B cell (primary cell): ENCODE measurements at regions of chr17 and their contacts with region 1.

Region 1: GRCh38 chr17:76726231-76726775 is at the start of gene JMJD6:
- DNase-seq: no peak
- ATAC-seq: peak; percentile 83
- H3K4me3 ChIP-seq: peak within 1 kb of the TSS; percentile 67 to 92 (median 84)
- H3K4me3 Mint-ChIP-seq: peak within 1 kb of the TSS; percentile 99
- H3K27ac ChIP-seq: peak within 1 kb of the TSS; percentile 98 to 99
- H3K27ac Mint-ChIP-seq: peak within 1 kb of the TSS; percentile 99
- H3K4me1 ChIP-seq: peaks cover 30 to 52% of the 10 kb centered on the region in 2 donors
- H3K4me1 Mint-ChIP-seq: peaks cover 50% of the 10 kb centered on the region
- H3K27me3 ChIP-seq: no peaks in the 10 kb centered on the region
- H3K27me3 Mint-ChIP-seq: no peaks in the 10 kb centered on the region
- CTCF ChIP-seq: no peak
- total RNA-seq, gene JMJD6: 38.2 and 41.1 TPM in 2 replicates

Region 2: GRCh38 chr17:75784473-75785015 is 941.8 kb before region 1 on chr17 and contains the start of gene UNK:
- CTCF ChIA-PET with region 1: no interaction called
- POLR2A ChIA-PET with region 1: no interaction called
- intact Hi-C with region 1: loop called (anchors 2 kb)
- DNase-seq: peak; percentile 99
- ATAC-seq: peak; percentile 75
- H3K4me3 ChIP-seq: peak within 1 kb of the TSS; percentile 75 to 83 (median 81)
- H3K4me3 Mint-ChIP-seq: peak within 1 kb of the TSS; percentile 96
- H3K27ac ChIP-seq: peak within 1 kb of the TSS; percentile 100
- H3K27ac Mint-ChIP-seq: peak within 1 kb of the TSS; percentile 100
- H3K4me1 ChIP-seq: peaks cover 42 to 49% of the 10 kb centered on the region in 2 donors
- H3K4me1 Mint-ChIP-seq: peaks cover 53% of the 10 kb centered on the region
- H3K27me3 ChIP-seq: no peaks in the 10 kb centered on the region
- H3K27me3 Mint-ChIP-seq: no peaks in the 10 kb centered on the region
- CTCF ChIP-seq: no peak
- total RNA-seq, gene UNK: 70.3 and 82.3 TPM in 2 replicates

Region 3: DNA sequence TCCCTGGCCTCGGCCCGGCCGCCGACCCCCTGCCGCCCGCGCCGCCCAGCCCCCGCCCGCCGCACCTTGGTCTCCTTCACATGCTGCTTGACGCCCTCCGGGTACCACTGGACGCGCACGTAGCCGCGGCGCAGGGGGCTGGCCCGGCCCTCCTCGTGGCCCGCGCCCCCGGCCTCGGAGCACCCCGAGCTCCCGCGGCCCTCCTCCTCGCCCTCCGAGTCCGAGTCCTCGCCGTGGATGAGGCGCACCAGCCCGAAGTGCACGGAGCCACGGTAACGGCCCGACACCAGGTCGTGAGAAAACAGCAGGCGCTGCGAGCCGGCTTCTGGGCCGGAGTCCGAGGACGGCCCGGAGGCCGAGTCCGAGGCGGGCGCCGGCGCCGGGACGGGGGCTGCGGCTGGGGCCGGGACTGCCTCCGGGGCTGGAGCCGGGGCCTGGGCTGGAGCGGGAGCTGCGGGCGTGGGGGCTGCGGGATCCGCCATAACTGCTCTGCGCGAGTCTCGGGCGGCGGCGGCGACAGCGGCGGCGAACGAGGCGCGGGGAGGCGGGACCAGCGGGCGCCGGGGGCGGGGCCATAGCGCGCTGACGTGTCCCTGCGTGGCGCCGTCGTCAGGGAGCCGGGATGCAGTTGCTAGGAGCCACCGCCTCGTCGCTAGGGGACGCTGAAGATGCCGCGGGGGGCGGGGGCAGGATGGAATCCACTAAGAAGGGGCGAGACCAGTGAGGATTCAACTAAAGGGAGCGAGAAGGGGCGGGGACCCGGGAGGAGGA is 273.5 kb before region 1 on chr17 and contains the start of gene UBE2O:
- CTCF ChIA-PET with region 1: no interaction called
- POLR2A ChIA-PET with region 1: no interaction called
- intact Hi-C with region 1: loop called (anchors 5 kb)
- DNase-seq: peak; percentile 95
- ATAC-seq: peak; percentile 93
- H3K4me3 ChIP-seq: peak within 1 kb of the TSS; percentile 46 to 91 (median 72)
- H3K4me3 Mint-ChIP-seq: peak within 1 kb of the TSS; percentile 88
- H3K27ac ChIP-seq: peak within 1 kb of the TSS; percentile 46 to 77
- H3K27ac Mint-ChIP-seq: peak within 1 kb of the TSS; percentile 88
- H3K4me1 ChIP-seq: peaks cover 22 to 26% of the 10 kb centered on the region in 2 donors
- H3K4me1 Mint-ChIP-seq: peaks cover 37% of the 10 kb centered on the region
- H3K27me3 ChIP-seq: no peaks in the 10 kb centered on the region
- H3K27me3 Mint-ChIP-seq: no peaks in the 10 kb centered on the region
- CTCF ChIP-seq: peak; percentile 62
- total RNA-seq, gene UBE2O: 54.0 and 62.4 TPM in 2 replicates

Region 4: GRCh38 chr17:76654408-76654807 is 71.9 kb before region 1 on chr17:
- CTCF ChIA-PET with region 1: no interaction called
- POLR2A ChIA-PET with region 1: no interaction called
- intact Hi-C with region 1: no loop called
- DNase-seq: no peak
- ATAC-seq: no peak
- H3K4me3 ChIP-seq: no peak overlapping the region
- H3K4me3 Mint-ChIP-seq: no peak overlapping the region
- H3K27ac ChIP-seq: no peak overlapping the region
- H3K27ac Mint-ChIP-seq: no peak overlapping the region
- H3K4me1 ChIP-seq: no peaks in the 10 kb centered on the region
- H3K4me1 Mint-ChIP-seq: no peaks in the 10 kb centered on the region
- H3K27me3 ChIP-seq: no peaks in the 10 kb centered on the region
- H3K27me3 Mint-ChIP-seq: peaks cover 16% of the 10 kb centered on the region
- CTCF ChIP-seq: no peak

Region 5: DNA sequence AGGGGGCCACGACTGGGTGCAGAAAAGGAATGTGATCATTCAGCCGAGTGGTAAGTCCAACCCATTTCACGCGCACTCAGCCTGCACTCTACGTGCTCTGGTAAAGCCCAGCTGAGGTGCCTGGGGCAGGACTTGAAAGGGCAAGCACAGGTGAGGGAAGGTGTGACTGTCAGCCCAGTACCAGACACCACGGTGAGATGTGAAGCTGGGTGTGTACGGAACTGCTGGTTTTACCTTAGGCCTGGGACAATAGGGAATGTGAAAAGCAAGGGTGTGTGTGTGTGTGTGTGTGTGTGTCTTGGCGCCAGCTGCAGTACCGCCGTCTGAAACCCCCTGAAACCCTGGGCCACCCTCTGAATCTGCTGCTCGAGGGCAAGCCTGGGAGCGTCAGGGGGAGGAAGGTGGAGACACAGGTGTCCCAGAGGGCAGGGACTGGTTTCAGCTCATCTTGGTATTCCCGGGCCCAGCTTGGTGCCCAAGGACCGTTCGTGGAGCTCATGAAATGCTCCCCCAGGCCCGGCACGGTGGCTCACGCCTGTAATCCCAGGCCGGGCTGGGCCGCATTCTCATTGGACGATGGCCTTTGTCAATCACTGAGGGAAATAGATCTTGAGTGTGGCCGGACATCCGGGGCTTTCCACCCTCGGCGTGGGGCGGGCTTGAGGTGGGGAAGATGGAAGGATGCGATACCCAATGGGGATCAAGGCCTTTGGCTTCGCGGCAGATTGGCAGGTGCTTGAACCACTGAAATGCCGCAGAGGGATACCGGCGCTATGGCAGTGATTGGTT is 55.0 kb before region 1 on chr17:
- CTCF ChIA-PET with region 1: no interaction called
- POLR2A ChIA-PET with region 1: interaction called, 4 read pairs
- intact Hi-C with region 1: loop called (anchors 1 kb)
- DNase-seq: peak; percentile 99
- ATAC-seq: peak; percentile 99
- H3K4me3 ChIP-seq: peak overlapping the region; percentile 66 to 92 (median 84)
- H3K4me3 Mint-ChIP-seq: peak overlapping the region; percentile 92
- H3K27ac ChIP-seq: peak overlapping the region; percentile 80 to 81
- H3K27ac Mint-ChIP-seq: peak overlapping the region; percentile 93
- H3K4me1 ChIP-seq: peaks cover 10 to 18% of the 10 kb centered on the region in 2 donors
- H3K4me1 Mint-ChIP-seq: peaks cover 25% of the 10 kb centered on the region
- H3K27me3 ChIP-seq: peaks cover 0 to 3% (median 1%) of the 10 kb centered on the region in 4 experiments
- H3K27me3 Mint-ChIP-seq: peaks cover 13% of the 10 kb centered on the region
- CTCF ChIP-seq: no peak

Region 6: GRCh38 chr17:76714822-76715495 is 11.3 kb before region 1 on chr17:
- CTCF ChIA-PET with region 1: interaction called, 56 read pairs
- POLR2A ChIA-PET with region 1: no interaction called
- intact Hi-C with region 1: loop called (anchors 1 kb)
- DNase-seq: peak; percentile 75
- ATAC-seq: peak; percentile 7
- H3K4me3 ChIP-seq: peak overlapping the region in 3 of 5 experiments; percentile 11 to 20 (median 12)
- H3K4me3 Mint-ChIP-seq: peak overlapping the region; percentile 62
- H3K27ac ChIP-seq: peak overlapping the region; percentile 46 to 72
- H3K27ac Mint-ChIP-seq: peak overlapping the region; percentile 21
- H3K4me1 ChIP-seq: peaks cover 22 to 31% of the 10 kb centered on the region in 2 donors
- H3K4me1 Mint-ChIP-seq: peaks cover 25% of the 10 kb centered on the region
- H3K27me3 ChIP-seq: no peaks in the 10 kb centered on the region
- H3K27me3 Mint-ChIP-seq: no peaks in the 10 kb centered on the region
- CTCF ChIP-seq: peak; percentile 91

Region 7: GRCh38 chr17:76737082-76737675 is 10.9 kb after region 1 on chr17 and contains the start of gene SRSF2:
- CTCF ChIA-PET with region 1: interaction called, 29 read pairs
- POLR2A ChIA-PET with region 1: interaction called, 75 read pairs
- intact Hi-C with region 1: loop called (anchors 1 kb)
- DNase-seq: peak; percentile 99
- ATAC-seq: peak; percentile 76
- H3K4me3 ChIP-seq: peak within 1 kb of the TSS; percentile 95 to 99 (median 97)
- H3K4me3 Mint-ChIP-seq: peak within 1 kb of the TSS; percentile 97
- H3K27ac ChIP-seq: peak within 1 kb of the TSS; percentile 95 to 97
- H3K27ac Mint-ChIP-seq: peak within 1 kb of the TSS; percentile 99
- H3K4me1 ChIP-seq: peaks cover 35 to 36% of the 10 kb centered on the region in 2 donors
- H3K4me1 Mint-ChIP-seq: peaks cover 53% of the 10 kb centered on the region
- H3K27me3 ChIP-seq: no peaks in the 10 kb centered on the region
- H3K27me3 Mint-ChIP-seq: no peaks in the 10 kb centered on the region
- CTCF ChIP-seq: no peak
- total RNA-seq, gene SRSF2: 356 and 362 TPM in 2 replicates

Region 8: DNA sequence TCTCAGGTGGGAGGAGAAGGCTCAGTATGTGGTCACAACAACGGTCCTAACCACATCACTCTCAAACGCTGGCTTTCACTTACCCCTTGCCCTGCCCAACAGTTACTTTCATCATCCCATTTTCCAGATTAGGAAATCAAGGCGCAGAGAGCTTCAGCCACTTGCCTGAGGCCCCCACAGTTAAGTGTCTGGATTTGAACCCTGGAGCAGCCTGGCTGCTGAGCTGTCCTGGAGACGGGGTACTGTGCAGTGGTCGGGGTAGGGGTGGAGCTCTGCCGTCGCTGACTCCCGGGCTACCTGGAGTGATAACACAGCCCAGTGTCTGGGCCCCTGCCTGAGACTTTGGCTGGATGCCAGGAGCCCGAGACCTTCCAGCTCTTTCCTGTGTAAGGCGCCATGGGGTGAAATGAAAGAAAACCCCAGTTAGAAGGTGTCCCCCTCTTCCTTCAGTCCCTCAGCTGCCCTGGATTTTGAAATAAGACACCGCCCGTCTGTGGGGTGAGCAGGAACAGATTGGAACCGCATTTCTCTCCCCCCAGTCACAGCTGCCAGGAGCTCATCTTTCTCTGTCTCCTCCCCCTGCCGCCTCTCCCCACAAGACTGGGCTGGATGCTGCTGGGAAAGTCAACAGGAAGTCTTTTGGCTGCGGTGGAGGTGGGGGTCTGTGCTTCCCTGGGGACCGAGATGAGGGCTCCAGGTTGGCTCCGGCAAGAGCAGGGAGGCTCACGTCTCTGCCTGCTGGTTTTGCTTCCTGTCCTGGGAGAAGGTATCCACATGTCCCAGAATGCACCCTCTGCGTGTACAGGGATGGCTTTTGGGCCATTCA is 694.7 kb after region 1 on chr17:
- CTCF ChIA-PET with region 1: no interaction called
- POLR2A ChIA-PET with region 1: no interaction called
- intact Hi-C with region 1: no loop called
- DNase-seq: peak; percentile 57
- ATAC-seq: peak; percentile 46
- H3K4me3 ChIP-seq: peak overlapping the region in 4 of 5 experiments; percentile 13 to 40 (median 24)
- H3K4me3 Mint-ChIP-seq: peak overlapping the region; percentile 82
- H3K27ac ChIP-seq: peak overlapping the region; percentile 25 to 27
- H3K27ac Mint-ChIP-seq: peak overlapping the region; percentile 72
- H3K4me1 ChIP-seq: peaks cover 28 to 49% of the 10 kb centered on the region in 2 donors
- H3K4me1 Mint-ChIP-seq: peaks cover 31% of the 10 kb centered on the region
- H3K27me3 ChIP-seq: no peaks in the 10 kb centered on the region
- H3K27me3 Mint-ChIP-seq: no peaks in the 10 kb centered on the region
- CTCF ChIP-seq: no peak